Activated CD4-positive, alpha-beta T cell treated with anti-CD3 and anti-CD28 coated beads for 36 hours (primary cell): ENCODE measurements at regions of chr19 and their contacts with region 1.

Region 1: GRCh38 chr19:33795370-33796163 is 1.1 kb upstream of the KCTD15 start:
- DNase-seq: peak; percentile 77
- ATAC-seq: peak; percentile 59
- H3K4me3 Mint-ChIP-seq: peak overlapping the region; percentile 72
- H3K27ac Mint-ChIP-seq: no peak overlapping the region
- H3K4me1 Mint-ChIP-seq: peaks cover 2% of the 10 kb centered on the region
- H3K27me3 Mint-ChIP-seq: peaks cover 24% of the 10 kb centered on the region

Region 2: GRCh38 chr19:33819880-33820781 is 24.6 kb after region 1 on chr19:
- CTCF ChIA-PET with region 1: interaction called, 10 read pairs
- POLR2A ChIA-PET with region 1: no interaction called
- intact Hi-C with region 1: loop called in 1 of 2 experiments (anchors 1 kb)
- DNase-seq: peak; percentile 84
- ATAC-seq: peak; percentile 86
- H3K4me3 Mint-ChIP-seq: peak overlapping the region; percentile 71
- H3K27ac Mint-ChIP-seq: peak overlapping the region; percentile 77
- H3K4me1 Mint-ChIP-seq: peaks cover 17% of the 10 kb centered on the region
- H3K27me3 Mint-ChIP-seq: no peaks in the 10 kb centered on the region

Region 3: DNA sequence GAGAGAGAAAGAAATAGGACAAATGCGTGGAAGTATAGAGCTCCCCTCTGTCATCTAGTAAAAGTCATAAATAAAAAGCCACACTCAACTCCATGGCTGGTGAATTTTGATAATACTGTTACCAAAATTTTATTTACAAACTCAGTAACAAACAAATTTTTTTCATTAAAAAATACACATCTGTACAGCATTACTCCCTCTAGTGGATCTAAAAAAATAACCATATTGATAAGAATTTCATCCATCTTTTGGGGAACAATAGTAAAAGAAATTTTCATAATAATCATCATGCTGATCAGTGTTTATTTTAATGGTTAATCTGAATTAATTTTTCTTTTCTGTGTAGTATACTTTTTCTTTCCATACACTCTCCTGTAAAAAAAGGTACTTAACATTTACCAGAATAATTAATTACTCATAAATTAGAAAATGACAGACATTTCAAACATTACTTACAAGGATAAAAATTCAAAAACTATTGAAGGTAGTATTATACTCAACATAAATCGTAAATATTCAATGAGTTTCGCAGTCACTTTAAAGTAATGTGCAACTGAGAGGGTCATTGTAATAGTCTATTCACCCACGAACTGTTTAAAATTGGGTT is 203.3 kb after region 1 on chr19:
- CTCF ChIA-PET with region 1: interaction called, 5 read pairs
- POLR2A ChIA-PET with region 1: no interaction called
- intact Hi-C with region 1: loop called in 1 of 2 experiments (anchors 5 kb)
- DNase-seq: no peak
- ATAC-seq: no peak
- H3K4me3 Mint-ChIP-seq: no peak overlapping the region
- H3K27ac Mint-ChIP-seq: no peak overlapping the region
- H3K4me1 Mint-ChIP-seq: no peaks in the 10 kb centered on the region
- H3K27me3 Mint-ChIP-seq: peaks cover 23% of the 10 kb centered on the region

Region 4: DNA sequence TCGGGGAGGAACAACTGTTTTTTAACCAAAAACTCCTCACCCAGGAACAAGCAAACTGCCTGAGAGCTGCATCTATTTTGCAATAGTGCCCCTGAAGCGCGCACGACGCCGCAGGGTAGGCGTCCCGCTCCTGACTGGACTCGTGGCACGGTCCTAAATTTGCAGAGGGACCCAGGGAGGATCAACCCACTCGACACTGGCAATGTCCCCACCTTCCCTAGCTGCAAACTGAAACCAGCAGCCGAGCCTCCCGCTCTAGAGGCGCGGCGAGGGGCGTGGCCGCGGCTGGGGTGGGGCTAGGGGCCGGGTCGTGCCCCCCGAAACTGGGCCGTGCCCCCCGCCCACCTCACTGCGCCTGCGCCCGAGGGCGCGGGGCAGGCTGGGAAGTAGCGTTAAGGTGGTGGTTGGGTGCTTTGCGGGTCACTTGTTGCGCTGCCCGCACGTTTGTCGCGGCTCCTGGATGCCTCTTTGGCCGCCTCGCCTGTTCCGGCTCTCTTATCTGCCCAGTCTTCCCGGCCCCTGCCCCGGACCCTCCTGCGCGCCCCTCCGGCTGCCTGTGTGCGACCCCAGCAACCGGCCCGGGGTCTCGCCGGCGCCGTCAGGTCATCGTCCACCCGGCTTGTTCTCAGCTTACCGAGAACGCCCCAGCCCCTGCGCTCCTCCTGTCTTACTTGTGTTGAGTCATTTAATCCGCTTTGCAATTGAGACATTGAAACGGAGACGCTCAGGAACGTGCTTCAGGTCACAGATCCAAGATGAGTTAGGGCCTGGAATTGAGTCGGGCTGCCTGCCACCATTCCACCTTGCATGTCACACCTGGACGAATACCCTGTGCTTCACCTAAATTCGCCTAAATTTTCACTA is 338.9 kb after region 1 on chr19:
- CTCF ChIA-PET with region 1: no interaction called
- POLR2A ChIA-PET with region 1: no interaction called
- intact Hi-C with region 1: loop called in 1 of 2 experiments (anchors 2 kb)
- DNase-seq: peak; percentile 94
- ATAC-seq: peak; percentile 94
- H3K4me3 Mint-ChIP-seq: peak overlapping the region; percentile 92
- H3K27ac Mint-ChIP-seq: peak overlapping the region; percentile 95
- H3K4me1 Mint-ChIP-seq: peaks cover 9% of the 10 kb centered on the region
- H3K27me3 Mint-ChIP-seq: no peaks in the 10 kb centered on the region